Activated CD4-positive, alpha-beta memory T cell treated with anti-CD3 and anti-CD28 coated beads, Interleukin-2, amount 10 ng/mL, durations not matched to agents 7 days and 5 days (primary cell): ENCODE measurements at regions of chr4 and their contacts with region 1.

Region 1: GRCh38 chr4:2412885-2413716 is 5.3 kb downstream of the ZFYVE28 start:
- DNase-seq: peak; percentile 96
- H3K4me3 Mint-ChIP-seq: peak overlapping the region; percentile 62
- H3K27ac Mint-ChIP-seq: peak overlapping the region; percentile 98
- H3K4me1 Mint-ChIP-seq: peaks cover 79% of the 10 kb centered on the region
- H3K27me3 Mint-ChIP-seq: no peaks in the 10 kb centered on the region

Region 2: DNA sequence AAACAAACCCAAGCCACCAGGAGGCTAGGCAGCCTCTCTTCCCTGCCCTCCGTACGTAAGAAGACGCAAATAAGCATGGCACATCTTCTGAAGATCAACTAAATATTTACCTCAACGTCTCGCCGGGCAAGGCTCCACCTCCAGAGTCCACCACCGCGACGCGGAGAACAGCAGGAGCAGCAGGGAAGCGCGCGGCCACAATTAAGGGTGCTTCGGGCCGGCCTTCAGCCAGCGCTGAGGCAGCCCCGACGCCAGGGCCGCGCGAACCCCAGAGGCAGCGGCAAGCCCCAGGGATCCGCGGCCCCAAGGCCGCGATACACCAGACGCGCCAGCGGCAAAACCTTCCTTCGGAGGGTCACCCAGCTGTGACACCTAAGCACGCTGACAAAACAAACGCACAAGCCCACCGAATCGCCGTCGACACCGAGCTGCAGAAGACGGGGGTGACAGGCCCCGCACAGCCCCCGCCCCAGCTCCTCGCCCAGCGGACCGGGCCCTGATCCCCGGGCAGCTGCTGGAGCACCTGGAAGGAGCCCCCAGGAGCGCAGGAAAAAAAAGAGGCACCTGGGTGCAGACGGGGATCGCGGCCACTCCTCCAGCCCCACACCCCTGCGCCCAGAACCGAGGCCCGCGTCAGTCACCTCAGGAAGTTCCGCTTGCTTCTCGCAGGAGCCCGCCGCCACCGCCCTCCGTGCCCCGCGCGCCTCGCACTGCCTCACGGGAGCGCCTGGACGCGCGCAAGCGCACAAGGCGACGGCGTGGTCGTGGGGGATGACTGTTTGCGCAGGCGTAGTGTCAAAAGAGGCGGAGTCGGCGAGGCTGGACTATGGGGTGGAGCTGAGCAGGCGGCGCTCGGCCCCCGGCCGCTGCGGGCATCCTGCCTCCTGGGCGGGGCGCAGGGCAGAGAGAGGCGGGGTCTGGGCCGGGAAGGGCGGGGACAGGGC is 171.4 kb before region 1 on chr4 and contains the starts of genes HAUS3 and POLN:
- CTCF ChIA-PET with region 1: interaction called, 15 read pairs
- POLR2A ChIA-PET with region 1: interaction called, 60 read pairs
- DNase-seq: peak; percentile 100
- H3K4me3 Mint-ChIP-seq: peak within 1 kb of the TSS; percentile 95
- H3K27ac Mint-ChIP-seq: peak within 1 kb of the TSS; percentile 92
- H3K4me1 Mint-ChIP-seq: peaks cover 59% of the 10 kb centered on the region
- H3K27me3 Mint-ChIP-seq: no peaks in the 10 kb centered on the region
- total RNA-seq, gene HAUS3: 27.1 to 27.4 TPM
- total RNA-seq, gene POLN: 3.3 to 4.0 TPM

Region 3: GRCh38 chr4:2281575-2282343 is 131.3 kb before region 1 on chr4:
- CTCF ChIA-PET with region 1: interaction called, 4 read pairs
- POLR2A ChIA-PET with region 1: interaction called, 23 read pairs
- DNase-seq: peak; percentile 86
- H3K4me3 Mint-ChIP-seq: peak overlapping the region; percentile 4
- H3K27ac Mint-ChIP-seq: peak overlapping the region; percentile 88
- H3K4me1 Mint-ChIP-seq: peaks cover 33% of the 10 kb centered on the region
- H3K27me3 Mint-ChIP-seq: no peaks in the 10 kb centered on the region

Region 4: GRCh38 chr4:2313366-2313765 is 99.7 kb before region 1 on chr4:
- CTCF ChIA-PET with region 1: no interaction called
- POLR2A ChIA-PET with region 1: no interaction called
- DNase-seq: no peak
- H3K4me3 Mint-ChIP-seq: no peak overlapping the region
- H3K27ac Mint-ChIP-seq: no peak overlapping the region
- H3K4me1 Mint-ChIP-seq: no peaks in the 10 kb centered on the region
- H3K27me3 Mint-ChIP-seq: no peaks in the 10 kb centered on the region

Region 5: DNA sequence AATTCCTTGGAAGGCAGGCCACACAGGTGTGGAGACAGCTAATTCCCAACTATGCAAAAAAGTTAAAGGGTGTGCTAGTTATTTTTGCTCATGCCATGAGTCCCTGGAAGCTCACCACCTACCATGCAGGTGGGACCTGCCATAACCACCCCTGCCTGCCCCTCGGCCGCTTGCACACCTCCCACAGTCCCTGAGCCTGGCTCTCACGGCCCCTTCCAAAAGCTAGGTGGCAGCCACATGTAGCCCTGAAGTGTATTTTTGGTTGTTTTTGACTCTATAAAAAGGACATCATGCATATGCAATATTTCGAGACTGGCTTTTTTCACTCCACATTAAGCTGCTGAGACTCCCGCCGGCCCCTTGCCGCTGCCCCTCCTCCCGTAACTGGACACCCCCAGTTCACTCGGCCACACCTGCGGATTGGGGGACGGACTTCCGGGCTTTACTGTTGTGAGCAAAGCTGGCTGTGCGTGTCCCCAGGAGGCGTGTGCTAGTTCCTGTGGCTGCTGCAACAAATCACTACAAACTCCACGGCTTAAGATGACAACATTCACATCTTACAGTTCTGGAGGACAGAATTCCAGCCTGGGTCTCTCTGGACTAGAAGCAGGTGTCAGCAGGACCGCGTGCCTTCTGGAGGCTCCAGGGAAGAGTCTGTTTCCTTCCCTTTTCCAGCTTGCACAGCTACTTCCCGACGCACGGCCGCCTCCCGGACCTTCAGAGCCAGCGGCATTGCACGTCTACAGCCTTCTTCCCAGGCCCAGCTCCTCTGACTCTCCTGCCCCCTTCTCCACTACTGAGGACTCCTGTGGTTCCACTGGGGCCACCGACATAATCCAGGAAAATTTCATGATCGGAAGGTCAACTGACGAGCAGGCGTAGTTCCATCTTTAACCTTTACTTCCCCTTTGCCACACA is 19.5 kb before region 1 on chr4:
- CTCF ChIA-PET with region 1: interaction called, 6 read pairs
- POLR2A ChIA-PET with region 1: interaction called, 27 read pairs
- DNase-seq: peak; percentile 24
- H3K4me3 Mint-ChIP-seq: no peak overlapping the region
- H3K27ac Mint-ChIP-seq: no peak overlapping the region
- H3K4me1 Mint-ChIP-seq: peaks cover 41% of the 10 kb centered on the region
- H3K27me3 Mint-ChIP-seq: no peaks in the 10 kb centered on the region

Region 6: GRCh38 chr4:2468445-2469192 is 55.5 kb after region 1 on chr4 and contains the start of gene RNF4:
- CTCF ChIA-PET with region 1: interaction called, 9 read pairs
- POLR2A ChIA-PET with region 1: interaction called, 105 read pairs
- DNase-seq: peak; percentile 97
- H3K4me3 Mint-ChIP-seq: peak within 1 kb of the TSS; percentile 97
- H3K27ac Mint-ChIP-seq: peak within 1 kb of the TSS; percentile 98
- H3K4me1 Mint-ChIP-seq: peaks cover 52% of the 10 kb centered on the region
- H3K27me3 Mint-ChIP-seq: peaks cover 2% of the 10 kb centered on the region
- total RNA-seq, gene RNF4: 106 to 113 TPM